OCI-LY7 (cell line): ENCODE measurements at regions of chr5 and their contacts with region 1.

Region 1: GRCh38 chr5:14644623-14645237 is 19.8 kb upstream of the OTULIN start:
- DNase-seq: no peak
- H3K4me3 ChIP-seq: no peak overlapping the region
- H3K27ac ChIP-seq: no peak overlapping the region
- H3K4me1 ChIP-seq: no peaks in the 10 kb centered on the region
- CTCF ChIP-seq: no peak

Region 2: GRCh38 chr5:14364576-14365472 is 279.9 kb before region 1 on chr5:
- CTCF ChIA-PET with region 1: no interaction called
- POLR2A ChIA-PET with region 1: interaction called, 5 read pairs
- intact Hi-C with region 1: loop called (anchors 1 kb)
- DNase-seq: peak; percentile 60
- H3K4me3 ChIP-seq: no peak overlapping the region
- H3K27ac ChIP-seq: no peak overlapping the region
- H3K4me1 ChIP-seq: peaks cover 4% of the 10 kb centered on the region
- CTCF ChIP-seq: peak; percentile 86

Region 3: DNA sequence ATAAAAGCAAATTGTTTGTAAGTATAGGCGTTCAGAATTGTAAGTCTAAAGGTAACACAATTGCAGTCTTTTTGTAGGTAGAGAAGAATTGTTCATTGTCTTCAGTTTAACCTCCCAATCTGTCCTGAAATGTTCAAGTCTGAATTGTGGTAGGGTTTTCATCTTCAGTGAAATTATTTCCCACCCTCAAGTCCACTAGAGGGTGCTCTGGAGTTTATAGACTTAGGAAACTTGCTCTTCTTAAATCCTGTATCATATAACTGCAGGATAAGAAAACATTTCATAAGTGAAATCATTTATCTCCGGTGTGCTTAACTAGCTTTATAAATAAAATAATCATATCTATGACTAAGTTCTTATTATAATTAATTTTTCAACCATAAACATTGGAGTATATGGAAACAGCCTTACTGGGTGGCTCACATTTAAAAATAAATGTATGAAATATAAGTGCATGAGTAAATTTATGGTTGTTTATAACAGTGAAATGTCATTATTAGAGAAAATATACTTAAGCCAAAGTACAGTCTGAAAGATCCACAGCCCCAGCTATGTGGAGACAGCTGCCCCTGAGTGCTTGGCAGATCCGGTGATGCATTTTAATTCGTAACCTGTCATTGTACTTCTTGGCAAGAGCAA is 245.6 kb before region 1 on chr5:
- CTCF ChIA-PET with region 1: interaction called, 7 read pairs
- POLR2A ChIA-PET with region 1: no interaction called
- intact Hi-C with region 1: loop called (anchors 1 kb)
- DNase-seq: peak; percentile 57
- H3K4me3 ChIP-seq: no peak overlapping the region
- H3K27ac ChIP-seq: no peak overlapping the region
- H3K4me1 ChIP-seq: no peaks in the 10 kb centered on the region
- CTCF ChIP-seq: peak; percentile 89

Region 4: DNA sequence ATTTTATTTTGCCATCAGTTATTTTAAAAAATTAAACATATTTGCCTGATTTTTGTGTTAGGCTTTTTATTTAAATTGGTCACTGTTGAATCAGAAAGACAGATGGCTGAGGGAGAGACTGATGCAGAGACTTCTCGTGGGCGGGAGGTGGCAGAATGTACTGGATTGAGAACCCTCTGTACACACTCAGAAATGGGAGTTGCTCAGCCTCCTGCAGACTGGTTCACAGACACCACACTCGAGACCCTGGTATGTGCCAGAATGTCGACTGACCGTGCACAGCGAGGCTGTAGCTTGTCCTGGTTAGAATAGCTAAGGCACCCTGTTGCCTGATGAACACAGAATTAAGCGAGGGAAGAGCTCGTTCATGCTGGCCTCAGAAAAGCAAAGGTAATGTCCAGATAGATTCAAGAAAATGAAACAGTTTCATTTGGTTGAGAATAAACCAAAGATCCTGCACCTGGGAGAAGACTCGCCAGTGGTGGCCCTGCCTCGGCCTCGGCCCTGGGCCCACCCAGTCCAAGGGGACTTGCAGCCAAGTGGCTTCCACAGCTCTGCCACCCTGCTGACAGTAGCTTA is 134.5 kb before region 1 on chr5:
- CTCF ChIA-PET with region 1: no interaction called
- POLR2A ChIA-PET with region 1: no interaction called
- intact Hi-C with region 1: loop called (anchors 5 kb)
- DNase-seq: peak; percentile 13
- H3K4me3 ChIP-seq: no peak overlapping the region
- H3K27ac ChIP-seq: no peak overlapping the region
- H3K4me1 ChIP-seq: no peaks in the 10 kb centered on the region
- CTCF ChIP-seq: peak; percentile 49

Region 5: GRCh38 chr5:14628346-14628745 is 16.4 kb before region 1 on chr5:
- CTCF ChIA-PET with region 1: no interaction called
- POLR2A ChIA-PET with region 1: no interaction called
- intact Hi-C with region 1: no loop called
- DNase-seq: peak; percentile 56
- H3K4me3 ChIP-seq: no peak overlapping the region
- H3K27ac ChIP-seq: no peak overlapping the region
- H3K4me1 ChIP-seq: no peaks in the 10 kb centered on the region
- CTCF ChIP-seq: no peak